ENCODE measurements at regions of chr6 and their contacts with region 1.

Region 1: DNA sequence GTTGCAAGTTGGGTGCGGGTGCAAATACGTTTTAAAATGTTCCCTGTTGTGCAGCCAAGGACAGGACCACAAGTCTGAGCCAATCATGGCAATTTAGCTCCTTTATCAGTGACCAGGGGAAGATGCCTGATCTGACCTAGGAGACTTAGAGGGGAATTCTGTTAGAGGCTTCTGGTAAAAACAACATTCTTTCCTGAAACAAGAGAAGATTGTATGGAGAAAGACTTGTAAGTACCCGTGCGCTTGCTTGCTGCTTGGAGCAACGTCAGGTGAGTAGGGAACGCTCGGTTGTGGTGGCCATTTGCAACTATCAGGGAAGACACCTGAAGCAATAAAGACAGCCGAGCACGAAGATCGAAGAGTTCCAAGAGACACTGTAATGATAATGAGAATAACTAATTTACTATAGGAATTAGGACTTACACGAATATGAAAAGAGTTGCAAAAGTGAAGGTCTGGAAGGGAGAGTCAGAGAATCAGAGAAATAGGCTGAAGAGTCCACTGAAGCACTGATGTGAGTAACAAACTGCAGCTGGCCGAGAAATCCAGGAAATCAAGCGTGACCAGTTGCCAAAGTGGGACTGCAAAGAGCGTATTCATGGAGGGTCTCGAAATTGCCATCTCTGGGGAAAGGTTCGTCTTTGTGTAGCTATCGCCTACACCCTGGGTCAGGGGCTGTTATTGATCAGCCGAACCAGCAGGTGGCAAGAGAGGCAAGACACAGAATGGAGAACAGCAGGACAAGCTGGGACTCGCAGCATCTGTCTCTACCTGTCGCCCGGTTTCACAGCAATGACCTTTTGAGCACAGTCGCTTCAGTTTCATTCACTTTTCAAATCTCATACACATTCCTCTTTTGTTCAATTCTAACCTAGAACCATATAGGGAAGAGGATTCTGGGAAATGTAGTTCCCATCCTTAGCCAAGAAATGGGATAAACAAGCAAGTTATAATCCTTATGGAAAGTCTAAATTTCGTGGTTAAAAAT is 26.1 kb downstream of the LOC128125822 start:
- DNase-seq: peak in 1 of 2 experiments; percentile 72
- H3K4me3 ChIP-seq: peak overlapping the region; percentile 48 to 83 (median 62)
- H3K27ac ChIP-seq: peak overlapping the region; percentile 59; the same call in 1 of the 2 replicates
- H3K4me1 ChIP-seq: peaks cover 0 to 5% (median 2%) of the 10 kb centered on the region in 4 experiments; a peak in 3 of 7 replicates
- H3K27me3 ChIP-seq: no peaks in the 10 kb centered on the region
- CTCF ChIP-seq: peak; percentile 66 to 92 (median 81)
- EP300 ChIP-seq: no peak
- POLR2A ChIP-seq: peak; percentile 56 to 80
- RAD21 ChIP-seq: peak; percentile 76

Region 2: GRCh38 chr6:63573140-63573898 is 25.0 kb before region 1 on chr6:
- CTCF ChIA-PET with region 1: interaction called, 9 read pairs
- POLR2A ChIA-PET with region 1: interaction called, 26 read pairs
- DNase-seq: peak; percentile 76 to 86
- H3K4me3 ChIP-seq: peak overlapping the region; percentile 81 to 85 (median 82)
- H3K27ac ChIP-seq: peak overlapping the region; percentile 98
- H3K4me1 ChIP-seq: peaks cover 0 to 3% (median 0%) of the 10 kb centered on the region in 4 experiments; a peak in 1 of 7 replicates
- H3K27me3 ChIP-seq: 0 out of 7 replicates have a peak, but pooled peaks cover 0 to 2% (median under 1%) of the 10 kb centered on the region in 4 experiments
- CTCF ChIP-seq: no peak
- EP300 ChIP-seq: no peak
- POLR2A ChIP-seq: peak; percentile 93 to 98
- RAD21 ChIP-seq: no peak

Region 3: GRCh38 chr6:63584125-63584514 is 14.2 kb before region 1 on chr6:
- CTCF ChIA-PET with region 1: interaction called, 14 read pairs
- POLR2A ChIA-PET with region 1: interaction called, 20 read pairs
- DNase-seq: no peak
- H3K4me3 ChIP-seq: no peak overlapping the region
- H3K27ac ChIP-seq: no peak overlapping the region
- H3K4me1 ChIP-seq: no peaks in the 10 kb centered on the region
- H3K27me3 ChIP-seq: no peaks in the 10 kb centered on the region
- CTCF ChIP-seq: no peak
- EP300 ChIP-seq: no peak
- POLR2A ChIP-seq: peak in 1 of 2 experiments; percentile 46; a peak in 1 of 3 replicates
- RAD21 ChIP-seq: no peak

Region 4: GRCh38 chr6:63609231-63609630 is 10.9 kb after region 1 on chr6:
- CTCF ChIA-PET with region 1: interaction called, 24 read pairs
- POLR2A ChIA-PET with region 1: interaction called, 4 read pairs
- DNase-seq: no peak
- H3K4me3 ChIP-seq: no peak overlapping the region
- H3K27ac ChIP-seq: no peak overlapping the region
- H3K4me1 ChIP-seq: no peaks in the 10 kb centered on the region
- H3K27me3 ChIP-seq: no peaks in the 10 kb centered on the region
- CTCF ChIP-seq: no peak
- EP300 ChIP-seq: no peak
- POLR2A ChIP-seq: no peak
- RAD21 ChIP-seq: no peak

Region 5: GRCh38 chr6:63635588-63636517 is 37.5 kb after region 1 on chr6 and contains the start of gene PHF3:
- CTCF ChIA-PET with region 1: interaction called, 14 read pairs
- POLR2A ChIA-PET with region 1: interaction called, 21 read pairs
- DNase-seq: peak; percentile 60 to 87
- H3K4me3 ChIP-seq: peak within 1 kb of the TSS; percentile 85 to 95 (median 92)
- H3K27ac ChIP-seq: peak within 1 kb of the TSS; percentile 96
- H3K4me1 ChIP-seq: peaks cover 2 to 5% (median 4%) of the 10 kb centered on the region in 4 experiments; a peak in 4 of 7 replicates
- H3K27me3 ChIP-seq: peaks cover 0 to 12% (median 4%) of the 10 kb centered on the region in 4 experiments; a peak in 4 of 7 replicates
- CTCF ChIP-seq: no peak
- EP300 ChIP-seq: 0 out of 3 replicates have a peak, but pooled peaks of 1 of the 2 experiments have one; percentile 20
- POLR2A ChIP-seq: peak; percentile 69 to 95
- RAD21 ChIP-seq: no peak
- total RNA-seq, gene PHF3: 69.3 and 70.9 TPM in 2 replicates

Region 6: DNA sequence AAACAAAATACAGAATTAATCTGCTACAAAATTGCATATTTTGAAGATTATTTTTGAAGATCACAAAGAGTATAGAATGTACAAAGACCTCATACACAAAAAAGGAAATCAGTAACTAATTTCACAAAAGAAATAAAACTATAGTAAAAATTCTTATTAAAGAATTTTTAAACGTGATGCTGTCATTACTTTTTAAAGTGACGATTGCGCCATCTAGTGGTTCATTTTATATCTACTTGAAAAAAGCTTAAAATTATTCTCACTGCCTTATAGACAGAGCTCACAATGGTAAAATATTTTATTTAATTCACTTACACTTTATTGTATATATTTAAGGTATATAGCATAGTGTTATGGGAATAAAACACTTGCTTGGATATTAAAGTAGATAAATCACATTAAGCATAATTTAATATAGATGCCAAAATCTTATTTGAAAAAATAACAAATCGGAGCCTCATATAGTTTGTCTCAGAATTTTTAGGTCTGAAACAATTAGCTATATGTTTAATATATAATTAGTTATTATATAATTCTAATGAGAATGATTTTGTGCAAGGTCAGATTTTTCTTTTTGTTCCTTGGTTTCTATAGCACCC is 166.1 kb after region 1 on chr6:
- CTCF ChIA-PET with region 1: interaction called, 13 read pairs
- POLR2A ChIA-PET with region 1: no interaction called
- DNase-seq: no peak
- H3K4me3 ChIP-seq: no peak overlapping the region
- H3K27ac ChIP-seq: no peak overlapping the region
- H3K4me1 ChIP-seq: no peaks in the 10 kb centered on the region
- H3K27me3 ChIP-seq: no peaks in the 10 kb centered on the region
- CTCF ChIP-seq: peak in 1 of 3 experiments; percentile 19; a peak in 1 of 4 replicates
- EP300 ChIP-seq: no peak
- POLR2A ChIP-seq: no peak
- RAD21 ChIP-seq: peak in 1 of 2 experiments; percentile 50; a peak in 3 of 4 replicates